ENCODE measurements at regions of chr1 and their contacts with region 1.

Region 1: GRCh38 chr1:176880954-176881595 is 283.4 kb downstream of the ASTN1 start:
- DNase-seq: no peak

Region 2: GRCh38 chr1:176374967-176375569 is 506.0 kb before region 1 on chr1:
- intact Hi-C with region 1: loop called (anchors 2 kb)
- DNase-seq: peak; percentile 77

Measured in cardiac septum (tissue), 1 donor.